HAP-1 (cell line): ENCODE measurements at regions of chr14 and their contacts with region 1.

Region 1: DNA sequence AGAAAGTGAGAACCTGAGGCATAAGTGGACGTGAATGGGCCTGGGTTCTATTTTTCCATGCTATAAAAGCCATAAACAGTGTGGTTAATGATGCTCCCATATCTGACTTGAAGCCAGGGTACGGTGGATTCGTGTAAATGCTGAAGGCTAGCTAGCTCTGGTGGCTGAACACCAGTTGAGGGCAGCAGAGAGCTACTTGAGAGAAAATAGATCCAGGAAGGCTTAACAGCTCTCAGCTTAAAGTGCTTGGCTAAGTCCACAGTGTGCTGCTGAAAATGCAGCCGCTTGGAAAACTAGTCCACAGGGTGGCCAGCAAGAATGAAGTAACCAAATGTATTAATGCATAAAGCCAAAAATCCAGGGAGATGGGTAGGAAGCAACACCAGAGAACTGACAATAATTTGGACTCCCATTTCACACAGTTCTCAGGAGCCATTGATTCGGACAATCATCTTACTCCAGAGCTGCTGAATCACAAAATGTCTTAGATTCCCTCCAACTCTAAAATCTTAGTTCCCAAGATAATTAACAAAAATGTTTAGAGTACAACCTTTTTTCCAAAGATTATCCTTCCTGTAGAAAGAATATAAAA is 15.0 kb upstream of the FOXG1 start:
- DNase-seq: peak; percentile 76 to 83
- H3K4me3 ChIP-seq: no peak overlapping the region
- H3K4me1 ChIP-seq: peaks cover 7% of the 10 kb centered on the region
- H3K27me3 ChIP-seq: peaks cover 2% of the 10 kb centered on the region; the same call in 1 of the 2 replicates

Region 2: DNA sequence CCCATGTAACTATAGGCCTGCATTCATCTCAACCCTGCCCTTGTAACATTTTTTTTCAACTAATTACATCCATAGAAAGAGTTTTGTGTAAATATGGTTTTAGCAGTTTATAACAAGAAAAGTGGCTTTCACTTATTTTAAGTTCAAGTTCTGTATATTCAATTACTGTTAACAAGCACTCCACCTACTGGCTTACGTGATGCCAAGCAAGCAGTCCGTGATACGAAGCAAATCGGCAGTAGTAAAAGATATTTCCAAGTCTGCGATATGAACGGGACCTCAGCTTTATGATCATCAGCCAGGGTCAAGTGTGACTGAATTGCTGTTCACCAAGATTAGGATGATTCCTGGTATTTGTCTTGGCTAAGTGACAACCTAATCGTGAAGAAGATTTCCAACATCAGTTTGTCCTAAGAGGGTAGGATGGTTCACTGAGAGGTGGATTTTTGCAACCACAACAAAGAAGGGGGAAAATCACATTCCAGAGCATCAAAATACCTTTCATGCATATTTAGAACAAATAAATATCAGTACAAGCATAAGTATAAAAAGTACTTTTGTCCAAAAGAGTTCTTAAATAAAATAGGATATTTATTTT is 471.2 kb after region 1 on chr14:
- in situ Hi-C with region 1: no loop called
- DNase-seq: peak; percentile 39 to 45
- H3K4me3 ChIP-seq: no peak overlapping the region
- H3K4me1 ChIP-seq: no peaks in the 10 kb centered on the region; the same call in 1 of the 2 replicates
- H3K27me3 ChIP-seq: peaks cover 40% of the 10 kb centered on the region

Region 3: DNA sequence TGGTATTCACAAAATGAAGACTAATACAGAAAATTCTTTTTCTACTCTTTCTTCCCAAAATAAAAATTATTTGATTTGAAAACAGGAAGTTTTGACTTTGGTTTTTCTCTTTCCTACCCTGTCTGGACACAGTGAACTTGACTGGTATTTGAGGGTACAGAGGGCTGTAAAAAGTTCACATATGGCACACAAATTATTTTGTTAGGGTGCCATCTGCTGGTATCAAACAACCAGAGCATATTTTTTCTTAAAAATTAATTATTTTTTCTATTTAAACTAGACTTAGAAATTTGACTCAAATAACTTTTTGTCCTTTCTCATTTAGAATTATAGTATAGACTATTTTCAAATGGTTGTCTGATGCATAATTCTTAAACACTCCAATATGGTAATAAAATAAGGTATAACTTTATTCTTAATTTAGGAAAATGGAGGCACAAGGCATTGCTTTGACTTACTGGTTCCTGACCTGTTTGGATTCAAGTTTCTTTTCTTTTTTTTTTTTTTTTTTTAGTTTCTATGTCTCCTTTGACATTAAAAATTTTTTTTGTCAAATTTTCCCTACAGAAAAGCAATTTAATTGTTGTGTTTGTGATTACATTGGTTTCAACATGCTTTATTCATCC is 785.4 kb after region 1 on chr14:
- in situ Hi-C with region 1: loop called (anchors 10 kb)
- DNase-seq: peak in 1 of 2 experiments; percentile 30
- H3K4me3 ChIP-seq: no peak overlapping the region
- H3K4me1 ChIP-seq: no peaks in the 10 kb centered on the region
- H3K27me3 ChIP-seq: no peaks in the 10 kb centered on the region; the same call in 1 of the 2 replicates

Region 4: DNA sequence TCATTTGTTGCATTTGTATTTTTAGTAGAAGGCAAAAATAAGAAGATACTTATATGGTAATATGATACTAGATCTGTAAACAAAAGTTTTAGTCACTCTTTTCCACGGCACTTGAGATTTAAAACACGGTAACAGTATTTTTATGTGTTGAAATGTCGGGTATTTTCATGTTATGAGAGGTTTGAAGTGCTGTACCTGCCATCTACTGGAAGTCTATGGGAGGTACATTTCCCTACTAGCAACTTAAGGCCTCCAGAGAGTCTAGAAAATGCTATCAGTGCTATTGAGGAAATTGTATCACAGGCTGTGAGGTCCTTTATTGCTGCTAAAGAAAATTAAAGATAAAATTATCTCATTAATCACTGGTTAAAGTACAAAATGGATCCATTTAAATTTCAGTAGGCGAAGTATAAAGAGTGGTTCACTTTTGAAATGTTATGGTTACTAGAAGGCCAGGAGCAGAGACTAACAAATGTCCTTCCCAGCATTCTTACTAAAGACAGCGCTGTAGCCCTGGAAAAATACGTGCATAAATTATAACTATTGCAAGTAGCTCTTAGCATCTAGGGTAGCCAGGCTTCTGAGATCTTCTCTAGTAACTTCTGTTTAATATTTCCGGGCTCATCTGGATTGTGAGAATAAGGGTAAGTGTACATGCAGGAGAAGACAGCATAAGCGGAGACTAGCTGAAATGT is 1253.7 kb after region 1 on chr14:
- in situ Hi-C with region 1: loop called (anchors 25 kb)
- DNase-seq: peak in 1 of 2 experiments; percentile 64
- H3K4me3 ChIP-seq: no peak overlapping the region
- H3K4me1 ChIP-seq: peaks cover 28% of the 10 kb centered on the region
- H3K27me3 ChIP-seq: 0 out of 2 replicates have a peak, but pooled peaks cover 2% of the 10 kb centered on the region

Region 5: GRCh38 chr14:30214461-30215090 is 1463.0 kb after region 1 on chr14:
- in situ Hi-C with region 1: loop called (anchors 25 kb)
- DNase-seq: peak; percentile 26 to 58
- H3K4me3 ChIP-seq: no peak overlapping the region
- H3K4me1 ChIP-seq: no peaks in the 10 kb centered on the region
- H3K27me3 ChIP-seq: no peaks in the 10 kb centered on the region; the same call in 1 of the 2 replicates

Region 6: DNA sequence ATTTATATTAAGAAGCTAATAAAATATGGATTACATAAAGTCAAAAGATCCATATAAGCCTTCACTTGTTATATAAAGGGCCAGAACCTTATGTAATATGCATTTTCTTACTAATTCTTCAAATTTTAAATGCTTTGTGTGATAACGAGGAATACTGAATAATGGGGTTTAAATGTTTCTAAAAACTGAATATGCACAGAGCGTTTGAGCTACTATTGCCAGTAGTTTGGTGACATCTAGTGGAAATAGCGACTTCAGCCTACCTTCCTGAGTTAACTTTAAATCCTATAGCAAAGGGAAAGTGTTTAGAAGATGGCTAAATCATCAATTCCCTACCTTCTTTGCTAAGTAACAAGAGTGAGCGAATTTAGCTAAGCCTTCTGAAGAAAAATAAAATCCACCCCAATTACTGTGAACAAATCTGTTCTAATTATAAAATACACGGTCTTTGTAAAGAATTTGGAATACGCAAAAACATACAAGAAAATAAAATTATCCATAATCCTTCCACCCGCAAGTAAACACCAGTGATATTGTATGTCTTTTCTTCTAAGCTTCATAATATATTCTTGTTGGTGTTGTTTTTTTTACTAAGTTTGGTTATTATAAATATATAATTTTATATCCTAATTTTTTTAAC is 1691.9 kb after region 1 on chr14:
- in situ Hi-C with region 1: loop called (anchors 25 kb)
- DNase-seq: peak in 1 of 2 experiments; percentile 29
- H3K4me3 ChIP-seq: no peak overlapping the region
- H3K4me1 ChIP-seq: no peaks in the 10 kb centered on the region
- H3K27me3 ChIP-seq: peaks cover 63% of the 10 kb centered on the region